ENCODE measurements at regions of chr2 and their contacts with region 1.

Region 1: GRCh38 chr2:153478334-153479261 is at the start of gene RPRM:
- DNase-seq: peak; percentile 79 to 93 (median 89)
- H3K4me3 ChIP-seq: peak within 1 kb of the TSS; percentile 50
- H3K27ac ChIP-seq: peak within 1 kb of the TSS; percentile 36 to 55
- H3K4me1 ChIP-seq: peaks cover 4% of the 10 kb centered on the region
- H3K27me3 ChIP-seq: no peaks in the 10 kb centered on the region
- CTCF ChIP-seq: peak; percentile 69 to 91 (median 73)
- EP300 ChIP-seq: no peak
- POLR2A ChIP-seq: no peak
- total RNA-seq, gene RPRM: 3.6 to 36.4 (median 17.9) TPM

Region 2: GRCh38 chr2:152740743-152741328 is 737.8 kb before region 1 on chr2:
- intact Hi-C with region 1: loop called in 1 of 4 experiments (anchors 5 kb)
- DNase-seq: no peak
- H3K4me3 ChIP-seq: no peak overlapping the region
- H3K27ac ChIP-seq: no peak overlapping the region
- H3K4me1 ChIP-seq: no peaks in the 10 kb centered on the region
- H3K27me3 ChIP-seq: no peaks in the 10 kb centered on the region
- CTCF ChIP-seq: peak; percentile 60 to 78 (median 70)
- EP300 ChIP-seq: no peak
- POLR2A ChIP-seq: no peak

Region 3: GRCh38 chr2:152925547-152926327 is 552.9 kb before region 1 on chr2:
- intact Hi-C with region 1: loop called in 2 of 4 experiments (anchors 5 to 10 kb)
- DNase-seq: peak; percentile 51 to 78 (median 65)
- H3K4me3 ChIP-seq: no peak overlapping the region
- H3K27ac ChIP-seq: no peak overlapping the region
- H3K4me1 ChIP-seq: no peaks in the 10 kb centered on the region
- H3K27me3 ChIP-seq: no peaks in the 10 kb centered on the region
- CTCF ChIP-seq: peak in 2 of 3 donors; percentile 19 to 62
- EP300 ChIP-seq: no peak
- POLR2A ChIP-seq: no peak

Region 4: GRCh38 chr2:153163058-153163457 is 315.5 kb before region 1 on chr2:
- intact Hi-C with region 1: loop called in 1 of 4 experiments (anchors 10 kb)
- DNase-seq: no peak
- H3K4me3 ChIP-seq: no peak overlapping the region
- H3K27ac ChIP-seq: no peak overlapping the region
- H3K4me1 ChIP-seq: no peaks in the 10 kb centered on the region
- H3K27me3 ChIP-seq: no peaks in the 10 kb centered on the region
- CTCF ChIP-seq: no peak
- EP300 ChIP-seq: no peak
- POLR2A ChIP-seq: no peak

Region 5: DNA sequence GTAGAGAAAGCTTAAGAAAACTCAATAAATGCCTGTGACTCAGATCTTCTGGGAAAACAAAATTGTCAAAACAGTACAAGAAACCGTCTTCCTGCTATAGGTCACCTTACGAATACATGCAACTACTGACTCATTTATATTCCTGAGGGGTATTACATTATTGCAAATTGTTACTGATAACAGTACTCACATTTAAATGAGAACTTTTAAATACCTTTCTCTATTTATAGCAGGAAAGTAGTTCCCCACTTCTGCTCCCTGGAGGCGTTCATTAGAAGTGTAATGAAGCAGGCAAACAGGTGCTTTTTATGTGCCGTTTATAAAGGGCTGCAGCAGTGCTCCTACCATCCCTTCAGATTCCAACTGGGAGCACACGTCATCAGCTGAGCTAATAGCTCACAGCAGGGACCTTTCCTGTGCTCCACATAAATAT is 65.1 kb after region 1 on chr2:
- intact Hi-C with region 1: no loop called
- DNase-seq: no peak
- H3K4me3 ChIP-seq: no peak overlapping the region
- H3K27ac ChIP-seq: no peak overlapping the region
- H3K4me1 ChIP-seq: no peaks in the 10 kb centered on the region
- H3K27me3 ChIP-seq: no peaks in the 10 kb centered on the region
- CTCF ChIP-seq: no peak
- EP300 ChIP-seq: no peak
- POLR2A ChIP-seq: no peak

Region 6: GRCh38 chr2:153802671-153803070 is 324.1 kb after region 1 on chr2:
- intact Hi-C with region 1: no loop called
- DNase-seq: no peak
- H3K4me3 ChIP-seq: no peak overlapping the region
- H3K27ac ChIP-seq: no peak overlapping the region
- H3K4me1 ChIP-seq: no peaks in the 10 kb centered on the region
- H3K27me3 ChIP-seq: no peaks in the 10 kb centered on the region
- CTCF ChIP-seq: no peak
- EP300 ChIP-seq: no peak
- POLR2A ChIP-seq: no peak

Measured in ovary (tissue), 10 donors.